ENCODE measurements at regions of chr9 and their contacts with region 1.

Region 1: GRCh38 chr9:93003552-93004407 is 54.7 kb upstream of the SUSD3 start:
- DNase-seq: peak in 8 of 9 experiments; percentile 41 to 80 (median 70)
- ATAC-seq: peak; percentile 77
- H3K4me3 ChIP-seq: no peak overlapping the region
- H3K4me3 Mint-ChIP-seq: peak overlapping the region; percentile 5
- H3K27ac ChIP-seq: peak overlapping the region; percentile 23 to 41
- H3K27ac Mint-ChIP-seq: peak overlapping the region; percentile 92
- H3K4me1 ChIP-seq: peaks cover 52% of the 10 kb centered on the region
- H3K4me1 Mint-ChIP-seq: peaks cover 54% of the 10 kb centered on the region
- H3K27me3 ChIP-seq: no peaks in the 10 kb centered on the region
- H3K27me3 Mint-ChIP-seq: no peaks in the 10 kb centered on the region
- CTCF ChIP-seq: peak; percentile 56

Region 2: GRCh38 chr9:92963831-92964626 is 39.8 kb before region 1 on chr9:
- CTCF ChIA-PET with region 1: interaction called, 28 read pairs
- POLR2A ChIA-PET with region 1: interaction called, 30 read pairs
- intact Hi-C with region 1: loop called in 1 of 2 experiments (anchors 2 kb)
- DNase-seq: peak; percentile 64 to 94 (median 82)
- ATAC-seq: peak; percentile 74
- H3K4me3 ChIP-seq: peak overlapping the region; percentile 59 to 81
- H3K4me3 Mint-ChIP-seq: peak overlapping the region; percentile 91
- H3K27ac ChIP-seq: peak overlapping the region; percentile 91 to 94
- H3K27ac Mint-ChIP-seq: peak overlapping the region; percentile 100
- H3K4me1 ChIP-seq: peaks cover 62% of the 10 kb centered on the region
- H3K4me1 Mint-ChIP-seq: peaks cover 60% of the 10 kb centered on the region
- H3K27me3 ChIP-seq: no peaks in the 10 kb centered on the region
- H3K27me3 Mint-ChIP-seq: no peaks in the 10 kb centered on the region
- CTCF ChIP-seq: no peak

Region 3: DNA sequence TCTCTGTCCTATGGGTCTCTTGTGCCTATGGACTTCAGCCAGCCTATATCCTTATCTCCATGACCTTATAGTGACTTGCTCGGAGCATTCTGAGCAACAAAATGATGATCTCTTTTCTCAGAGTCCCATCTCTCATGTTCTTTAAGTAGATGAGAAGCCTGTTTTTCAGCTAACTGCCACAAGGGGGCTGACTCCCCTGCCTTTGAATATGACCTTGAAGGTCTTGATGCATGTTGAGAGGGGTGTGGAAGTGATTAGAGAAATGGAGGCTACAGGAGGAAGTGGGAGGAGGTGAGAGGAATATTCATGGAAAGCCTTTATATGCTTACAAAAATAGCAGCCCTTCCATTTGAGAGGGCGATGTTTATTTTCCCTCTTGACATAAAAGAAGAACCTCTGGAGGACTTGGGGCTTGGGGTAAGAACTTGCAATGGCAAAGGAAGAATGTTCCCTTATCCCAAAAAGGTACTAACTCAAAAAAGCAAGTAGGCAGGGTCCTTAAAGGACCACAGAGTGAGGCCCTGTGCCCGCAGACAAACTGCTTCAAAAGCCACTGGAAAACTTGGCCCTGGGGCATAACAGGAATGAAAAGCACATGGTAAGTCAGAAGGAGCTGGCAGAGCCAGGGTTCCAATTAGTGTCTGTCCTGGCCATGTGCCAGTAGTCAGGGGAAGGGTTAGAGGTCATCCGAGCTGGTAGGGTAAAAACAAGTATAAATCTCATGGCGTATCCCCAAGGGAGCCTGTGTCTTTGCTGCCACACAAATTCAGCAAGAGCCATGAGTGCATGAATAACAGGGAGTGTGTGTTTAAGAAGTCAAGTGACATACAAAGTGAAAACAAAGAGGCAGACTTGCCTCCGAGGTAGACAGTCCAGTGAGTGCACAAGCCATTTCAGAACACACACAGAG is 17.3 kb before region 1 on chr9:
- CTCF ChIA-PET with region 1: interaction called, 29 read pairs
- POLR2A ChIA-PET with region 1: interaction called, 6 read pairs
- intact Hi-C with region 1: no loop called
- DNase-seq: peak in 7 of 9 experiments; percentile 22 to 80 (median 67)
- ATAC-seq: peak; percentile 76
- H3K4me3 ChIP-seq: no peak overlapping the region
- H3K4me3 Mint-ChIP-seq: peak overlapping the region; percentile 6
- H3K27ac ChIP-seq: peak overlapping the region; percentile 14 to 59
- H3K27ac Mint-ChIP-seq: peak overlapping the region; percentile 86
- H3K4me1 ChIP-seq: peaks cover 73% of the 10 kb centered on the region
- H3K4me1 Mint-ChIP-seq: peaks cover 83% of the 10 kb centered on the region
- H3K27me3 ChIP-seq: no peaks in the 10 kb centered on the region
- H3K27me3 Mint-ChIP-seq: no peaks in the 10 kb centered on the region
- CTCF ChIP-seq: peak; percentile 73

Region 4: DNA sequence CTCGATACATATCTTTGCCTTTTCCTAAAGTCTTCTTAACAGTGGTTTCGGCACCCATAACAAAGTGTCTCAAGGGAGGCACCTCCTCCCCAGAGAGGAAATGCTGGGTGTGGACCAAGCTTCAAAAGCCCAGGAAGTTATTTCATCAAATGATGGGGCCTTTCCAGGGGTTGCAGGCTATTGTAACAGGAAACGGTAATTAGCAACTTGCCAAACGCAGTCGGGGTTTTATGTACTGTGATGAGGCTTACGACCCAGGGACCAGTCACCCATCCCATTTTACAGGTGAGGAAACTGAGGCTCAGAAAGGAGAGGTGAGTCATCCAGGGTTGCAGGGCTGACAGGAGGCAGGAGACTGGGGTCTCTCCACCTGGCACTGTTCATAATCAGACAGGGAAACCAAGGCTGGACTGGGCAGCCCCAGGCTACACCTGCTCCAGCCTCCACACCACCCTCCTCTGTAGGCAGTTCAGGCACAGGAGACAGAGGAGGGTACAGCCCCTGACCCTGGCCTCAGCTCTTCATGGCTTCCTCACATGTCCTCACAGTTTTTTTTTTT is 24.7 kb after region 1 on chr9:
- CTCF ChIA-PET with region 1: interaction called, 52 read pairs
- POLR2A ChIA-PET with region 1: interaction called, 16 read pairs
- intact Hi-C with region 1: loop called in 1 of 2 experiments (anchors 1 kb)
- DNase-seq: peak; percentile 44 to 94 (median 74)
- ATAC-seq: peak; percentile 83
- H3K4me3 ChIP-seq: peak overlapping the region; percentile 21 to 35
- H3K4me3 Mint-ChIP-seq: peak overlapping the region; percentile 72
- H3K27ac ChIP-seq: peak overlapping the region; percentile 78 to 86
- H3K27ac Mint-ChIP-seq: peak overlapping the region; percentile 97
- H3K4me1 ChIP-seq: peaks cover 91% of the 10 kb centered on the region
- H3K4me1 Mint-ChIP-seq: peaks cover 86% of the 10 kb centered on the region
- H3K27me3 ChIP-seq: no peaks in the 10 kb centered on the region
- H3K27me3 Mint-ChIP-seq: no peaks in the 10 kb centered on the region
- CTCF ChIP-seq: no peak

Region 5: GRCh38 chr9:93058355-93059096 is 54.7 kb after region 1 on chr9 and contains the start of gene SUSD3:
- CTCF ChIA-PET with region 1: interaction called, 10 read pairs
- POLR2A ChIA-PET with region 1: no interaction called
- intact Hi-C with region 1: no loop called
- DNase-seq: peak in 8 of 9 experiments; percentile 52 to 84 (median 69)
- ATAC-seq: peak; percentile 63
- H3K4me3 ChIP-seq: peak within 1 kb of the TSS; percentile 60 to 91
- H3K4me3 Mint-ChIP-seq: peak within 1 kb of the TSS; percentile 91
- H3K27ac ChIP-seq: peak within 1 kb of the TSS; percentile 63 to 83
- H3K27ac Mint-ChIP-seq: peak within 1 kb of the TSS; percentile 100
- H3K4me1 ChIP-seq: peaks cover 81% of the 10 kb centered on the region
- H3K4me1 Mint-ChIP-seq: peaks cover 80% of the 10 kb centered on the region
- H3K27me3 ChIP-seq: no peaks in the 10 kb centered on the region
- H3K27me3 Mint-ChIP-seq: no peaks in the 10 kb centered on the region
- CTCF ChIP-seq: no peak
- total RNA-seq, gene SUSD3: 20.6 to 22.7 TPM

Region 6: DNA sequence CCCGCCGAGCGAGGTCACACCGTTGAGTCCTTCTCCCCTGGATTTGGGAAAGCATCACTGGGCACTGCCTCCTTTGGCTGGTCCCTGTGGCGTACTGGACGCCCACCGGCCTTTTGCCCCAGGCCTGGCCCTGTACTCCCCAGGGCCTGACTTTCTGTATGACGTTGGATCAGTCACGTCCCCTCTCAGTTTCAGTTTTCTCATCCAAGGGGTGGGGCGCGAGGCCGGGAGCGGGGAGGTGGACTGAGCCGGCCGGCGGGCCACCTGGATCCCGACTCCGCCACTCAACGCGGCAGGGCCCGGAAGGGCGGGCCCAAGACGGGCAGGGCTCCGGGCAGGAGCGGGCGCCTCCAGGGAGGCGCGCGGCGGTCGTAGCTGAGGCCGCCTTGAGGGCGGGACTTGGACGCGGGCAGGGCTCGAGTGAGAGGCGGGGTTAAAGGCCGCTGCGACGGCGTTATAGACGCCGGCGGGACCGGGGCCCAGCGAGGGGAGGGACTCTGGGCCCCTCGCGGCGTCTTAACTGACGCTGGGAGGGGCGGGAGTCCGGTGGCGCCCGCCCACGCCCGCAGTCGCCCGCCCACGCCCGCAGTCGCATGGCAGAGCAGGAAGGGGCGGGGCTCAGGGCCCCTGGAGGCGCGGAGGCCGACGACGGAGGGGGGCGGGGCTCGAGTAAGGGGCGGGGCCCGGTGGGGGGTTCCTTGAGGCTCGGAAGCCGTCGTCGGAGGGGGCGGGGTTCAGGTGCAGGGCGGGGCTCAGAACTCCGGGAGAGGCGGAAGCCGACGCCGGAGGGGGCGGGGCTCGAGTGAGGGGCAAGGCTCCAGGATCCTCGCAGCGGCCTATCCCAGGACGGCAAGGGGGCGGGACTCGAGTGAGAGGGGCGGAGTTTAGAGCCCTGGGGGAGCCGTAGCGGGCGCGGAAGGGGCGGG is 91.7 kb after region 1 on chr9:
- CTCF ChIA-PET with region 1: interaction called, 7 read pairs
- POLR2A ChIA-PET with region 1: interaction called, 3 read pairs
- intact Hi-C with region 1: loop called in 1 of 2 experiments (anchors 5 kb)
- DNase-seq: peak; percentile 100
- ATAC-seq: peak; percentile 83
- H3K4me3 ChIP-seq: peak overlapping the region; percentile 70 to 89
- H3K4me3 Mint-ChIP-seq: peak overlapping the region; percentile 85
- H3K27ac ChIP-seq: peak overlapping the region; percentile 90 to 98
- H3K27ac Mint-ChIP-seq: peak overlapping the region; percentile 97
- H3K4me1 ChIP-seq: peaks cover 65% of the 10 kb centered on the region
- H3K4me1 Mint-ChIP-seq: peaks cover 71% of the 10 kb centered on the region
- H3K27me3 ChIP-seq: no peaks in the 10 kb centered on the region
- H3K27me3 Mint-ChIP-seq: no peaks in the 10 kb centered on the region
- CTCF ChIP-seq: no peak

Region 7: GRCh38 chr9:93193148-93193755 is 189.5 kb after region 1 on chr9:
- CTCF ChIA-PET with region 1: no interaction called
- POLR2A ChIA-PET with region 1: no interaction called
- intact Hi-C with region 1: no loop called
- DNase-seq: no peak
- ATAC-seq: no peak
- H3K4me3 ChIP-seq: no peak overlapping the region
- H3K4me3 Mint-ChIP-seq: no peak overlapping the region
- H3K27ac ChIP-seq: no peak overlapping the region
- H3K27ac Mint-ChIP-seq: no peak overlapping the region
- H3K4me1 ChIP-seq: no peaks in the 10 kb centered on the region
- H3K4me1 Mint-ChIP-seq: no peaks in the 10 kb centered on the region
- H3K27me3 ChIP-seq: no peaks in the 10 kb centered on the region
- H3K27me3 Mint-ChIP-seq: no peaks in the 10 kb centered on the region
- CTCF ChIP-seq: no peak

Region 8: DNA sequence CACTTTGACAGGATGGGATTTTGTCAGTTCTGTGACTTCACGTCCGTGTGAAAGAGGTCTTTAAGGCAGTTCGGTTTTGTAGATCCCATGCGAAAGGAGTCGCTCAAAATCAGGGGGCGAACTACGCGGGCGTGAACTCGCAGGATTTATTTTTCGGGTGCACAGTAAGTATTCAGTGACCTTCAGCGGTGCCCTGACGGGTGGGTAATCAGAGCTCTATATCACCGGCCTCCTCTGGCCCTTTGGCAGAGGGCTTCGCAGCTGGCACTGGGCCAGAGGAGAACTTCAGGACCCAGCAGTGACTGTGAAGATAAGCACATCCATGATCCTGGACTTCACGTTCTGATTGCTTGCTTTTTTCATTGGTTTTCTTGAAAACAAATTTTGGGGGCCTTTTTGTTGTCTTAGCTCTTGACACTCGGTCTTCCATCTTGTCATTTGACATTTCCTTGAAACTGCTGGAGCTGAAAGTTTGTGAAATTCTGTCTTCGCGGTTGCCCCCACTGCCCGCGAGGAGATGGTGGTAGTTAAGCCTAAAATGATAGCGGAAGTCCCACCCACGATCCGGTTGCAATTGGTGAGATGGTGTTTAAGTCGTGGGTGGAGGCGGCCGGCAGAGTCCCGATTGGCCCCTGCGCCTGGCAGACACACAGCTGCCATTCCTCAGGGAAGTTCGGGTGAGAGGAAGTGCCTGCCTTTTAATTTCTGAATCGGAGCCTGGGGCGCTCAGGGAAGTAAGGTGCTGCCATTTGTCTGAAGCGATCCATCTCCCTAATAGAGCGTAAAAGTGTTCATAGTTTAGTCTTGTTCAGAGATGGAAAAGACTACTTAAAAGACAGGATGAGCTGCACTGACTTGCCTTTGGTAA is 449.5 kb after region 1 on chr9 and contains the start of gene FAM120AOS:
- CTCF ChIA-PET with region 1: no interaction called
- POLR2A ChIA-PET with region 1: no interaction called
- intact Hi-C with region 1: loop called in 1 of 2 experiments (anchors 10 kb)
- DNase-seq: peak; percentile 59 to 95 (median 85)
- ATAC-seq: peak; percentile 74
- H3K4me3 ChIP-seq: peak within 1 kb of the TSS; percentile 63 to 88
- H3K4me3 Mint-ChIP-seq: peak within 1 kb of the TSS; percentile 90
- H3K27ac ChIP-seq: peak within 1 kb of the TSS; percentile 49 to 68
- H3K27ac Mint-ChIP-seq: peak within 1 kb of the TSS; percentile 95
- H3K4me1 ChIP-seq: peaks cover 27% of the 10 kb centered on the region
- H3K4me1 Mint-ChIP-seq: peaks cover 60% of the 10 kb centered on the region
- H3K27me3 ChIP-seq: no peaks in the 10 kb centered on the region
- H3K27me3 Mint-ChIP-seq: no peaks in the 10 kb centered on the region
- CTCF ChIP-seq: no peak
- total RNA-seq, gene FAM120AOS: 40.3 to 40.7 TPM